Caco-2 (cell line): ENCODE measurements at regions of chr9 and their contacts with region 1.

Region 1: GRCh38 chr9:94726495-94727191 is at the start of gene AOPEP:
- DNase-seq: peak; percentile 98 to 99
- H3K4me3 ChIP-seq: peak within 1 kb of the TSS; percentile 72
- H3K4me3 Mint-ChIP-seq: peak within 1 kb of the TSS; percentile 98
- H3K27ac Mint-ChIP-seq: peak within 1 kb of the TSS; percentile 94
- H3K4me1 ChIP-seq: no peaks in the 10 kb centered on the region
- H3K4me1 Mint-ChIP-seq: peaks cover 5% of the 10 kb centered on the region
- H3K27me3 ChIP-seq: no peaks in the 10 kb centered on the region
- H3K27me3 Mint-ChIP-seq: no peaks in the 10 kb centered on the region
- CTCF ChIP-seq: no peak
- total RNA-seq, gene AOPEP: 61.7 and 63.3 TPM in 2 replicates

Region 2: GRCh38 chr9:94656200-94656599 is 70.4 kb before region 1 on chr9:
- CTCF ChIA-PET with region 1: no interaction called
- POLR2A ChIA-PET with region 1: no interaction called
- intact Hi-C with region 1: no loop called
- DNase-seq: no peak
- H3K4me3 ChIP-seq: no peak overlapping the region
- H3K4me3 Mint-ChIP-seq: no peak overlapping the region
- H3K27ac Mint-ChIP-seq: no peak overlapping the region
- H3K4me1 ChIP-seq: no peaks in the 10 kb centered on the region
- H3K4me1 Mint-ChIP-seq: no peaks in the 10 kb centered on the region
- H3K27me3 ChIP-seq: no peaks in the 10 kb centered on the region
- H3K27me3 Mint-ChIP-seq: no peaks in the 10 kb centered on the region
- CTCF ChIP-seq: no peak

Region 3: DNA sequence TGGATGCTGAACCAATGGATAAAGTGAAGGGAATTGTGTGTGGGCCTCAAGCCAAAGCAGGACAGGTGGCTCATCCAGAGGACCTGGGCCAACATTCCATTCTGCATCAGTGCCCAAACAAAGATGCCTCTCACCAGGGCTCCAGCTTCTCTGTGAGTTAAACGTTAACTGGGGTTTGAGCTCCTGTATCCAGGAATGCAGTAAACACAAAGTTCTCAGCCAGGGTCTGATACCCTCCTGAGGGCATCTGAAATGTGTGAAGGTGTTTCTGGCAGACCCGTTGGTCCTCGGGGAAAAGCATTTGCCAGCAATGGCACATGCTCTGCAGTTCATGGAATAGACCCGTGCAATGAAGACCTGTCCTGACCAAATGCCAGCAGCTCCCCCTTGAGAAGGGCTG is 34.0 kb before region 1 on chr9:
- CTCF ChIA-PET with region 1: interaction called, 3 read pairs
- POLR2A ChIA-PET with region 1: interaction called, 10 read pairs
- intact Hi-C with region 1: loop called (anchors 1 kb)
- DNase-seq: peak; percentile 87 to 90
- H3K4me3 ChIP-seq: no peak overlapping the region
- H3K4me3 Mint-ChIP-seq: no peak overlapping the region
- H3K27ac Mint-ChIP-seq: peak overlapping the region; percentile 70
- H3K4me1 ChIP-seq: peaks cover 50% of the 10 kb centered on the region
- H3K4me1 Mint-ChIP-seq: peaks cover 31% of the 10 kb centered on the region
- H3K27me3 ChIP-seq: no peaks in the 10 kb centered on the region
- H3K27me3 Mint-ChIP-seq: no peaks in the 10 kb centered on the region
- CTCF ChIP-seq: no peak

Region 4: DNA sequence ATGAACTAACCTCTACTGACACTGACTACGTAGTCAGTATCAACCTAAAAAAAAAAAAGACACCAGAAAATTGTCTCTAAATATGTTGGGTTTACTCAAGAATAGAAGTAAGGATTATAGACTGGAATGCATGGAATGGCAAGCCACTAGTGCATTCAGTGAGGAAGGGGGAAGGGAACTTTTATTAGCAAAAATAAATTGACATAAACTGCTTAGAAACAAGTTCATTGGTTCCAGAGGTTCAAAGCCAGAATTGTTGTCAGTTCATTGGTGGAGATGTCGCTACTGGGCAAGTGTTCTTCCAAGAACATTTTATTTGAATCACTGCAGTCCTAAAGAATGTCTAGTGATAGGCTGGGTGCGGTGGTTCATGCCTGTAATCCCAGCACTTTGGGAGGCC is 26.2 kb before region 1 on chr9:
- CTCF ChIA-PET with region 1: interaction called, 7 read pairs
- POLR2A ChIA-PET with region 1: interaction called, 7 read pairs
- intact Hi-C with region 1: loop called (anchors 1 kb)
- DNase-seq: peak in 1 of 2 experiments; percentile 52
- H3K4me3 ChIP-seq: no peak overlapping the region
- H3K4me3 Mint-ChIP-seq: peak overlapping the region; percentile 54
- H3K27ac Mint-ChIP-seq: peak overlapping the region; percentile 85
- H3K4me1 ChIP-seq: peaks cover 68% of the 10 kb centered on the region
- H3K4me1 Mint-ChIP-seq: peaks cover 43% of the 10 kb centered on the region
- H3K27me3 ChIP-seq: no peaks in the 10 kb centered on the region
- H3K27me3 Mint-ChIP-seq: no peaks in the 10 kb centered on the region
- CTCF ChIP-seq: no peak